Activated naive CD4-positive, alpha-beta T cell treated with anti-CD3 and anti-CD28 coated beads for 36 hours (primary cell): ENCODE measurements at regions of chr9 and their contacts with region 1.

Region 1: GRCh38 chr9:2053883-2054845 is 39.0 kb downstream of the SMARCA2 start:
- DNase-seq: peak; percentile 89
- H3K4me3 Mint-ChIP-seq: peak overlapping the region; percentile 5
- H3K27ac Mint-ChIP-seq: peak overlapping the region; percentile 83
- H3K4me1 Mint-ChIP-seq: peaks cover 53% of the 10 kb centered on the region
- H3K27me3 Mint-ChIP-seq: no peaks in the 10 kb centered on the region

Region 2: DNA sequence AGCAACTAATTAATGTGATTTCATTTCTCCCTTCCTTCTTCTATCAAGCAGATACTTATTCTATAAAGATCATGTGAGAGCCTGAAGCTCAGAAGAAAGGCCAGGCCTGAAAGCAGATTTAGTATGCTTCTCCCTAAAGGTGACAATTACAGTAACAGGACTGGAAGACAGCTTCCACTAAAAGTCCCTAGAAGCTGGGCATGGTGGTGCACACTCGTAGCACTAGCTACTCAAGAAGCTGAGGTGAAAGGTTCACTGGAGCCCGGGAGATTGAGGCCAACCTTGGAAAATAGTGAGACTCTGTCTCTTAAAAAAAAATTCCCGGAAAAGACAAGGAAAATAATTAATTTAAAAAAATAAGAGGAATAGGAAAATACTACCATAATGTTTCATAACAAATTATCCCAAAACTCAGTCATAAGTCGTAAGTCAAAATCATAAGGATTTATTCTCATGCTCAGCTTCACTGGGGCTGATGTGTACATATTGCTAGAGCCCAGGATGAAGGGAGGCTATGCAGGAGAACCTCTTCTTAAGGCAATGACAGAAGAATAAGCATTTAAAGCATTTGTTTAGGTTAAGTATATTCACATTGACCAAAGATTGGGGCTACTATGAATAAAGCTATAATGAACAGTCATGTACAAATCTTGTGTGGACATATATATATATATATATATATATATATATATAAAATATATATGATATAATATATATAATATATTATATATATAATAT is 249.9 kb before region 1 on chr9:
- CTCF ChIA-PET with region 1: no interaction called
- intact Hi-C with region 1: no loop called
- DNase-seq: no peak
- H3K4me3 Mint-ChIP-seq: no peak overlapping the region
- H3K27ac Mint-ChIP-seq: no peak overlapping the region
- H3K4me1 Mint-ChIP-seq: no peaks in the 10 kb centered on the region
- H3K27me3 Mint-ChIP-seq: peaks cover 4% of the 10 kb centered on the region

Region 3: GRCh38 chr9:1956958-1957357 is 97.2 kb before region 1 on chr9:
- CTCF ChIA-PET with region 1: no interaction called
- intact Hi-C with region 1: no loop called
- DNase-seq: no peak
- H3K4me3 Mint-ChIP-seq: no peak overlapping the region
- H3K27ac Mint-ChIP-seq: no peak overlapping the region
- H3K4me1 Mint-ChIP-seq: no peaks in the 10 kb centered on the region
- H3K27me3 Mint-ChIP-seq: no peaks in the 10 kb centered on the region

Region 4: GRCh38 chr9:2043881-2044462 is 10.2 kb before region 1 on chr9:
- CTCF ChIA-PET with region 1: no interaction called
- intact Hi-C with region 1: loop called (anchors 1 kb)
- DNase-seq: no peak
- H3K4me3 Mint-ChIP-seq: no peak overlapping the region
- H3K27ac Mint-ChIP-seq: no peak overlapping the region
- H3K4me1 Mint-ChIP-seq: peaks cover 53% of the 10 kb centered on the region
- H3K27me3 Mint-ChIP-seq: no peaks in the 10 kb centered on the region